ENCODE measurements at regions of chr10 and their contacts with region 1.

Region 1: DNA sequence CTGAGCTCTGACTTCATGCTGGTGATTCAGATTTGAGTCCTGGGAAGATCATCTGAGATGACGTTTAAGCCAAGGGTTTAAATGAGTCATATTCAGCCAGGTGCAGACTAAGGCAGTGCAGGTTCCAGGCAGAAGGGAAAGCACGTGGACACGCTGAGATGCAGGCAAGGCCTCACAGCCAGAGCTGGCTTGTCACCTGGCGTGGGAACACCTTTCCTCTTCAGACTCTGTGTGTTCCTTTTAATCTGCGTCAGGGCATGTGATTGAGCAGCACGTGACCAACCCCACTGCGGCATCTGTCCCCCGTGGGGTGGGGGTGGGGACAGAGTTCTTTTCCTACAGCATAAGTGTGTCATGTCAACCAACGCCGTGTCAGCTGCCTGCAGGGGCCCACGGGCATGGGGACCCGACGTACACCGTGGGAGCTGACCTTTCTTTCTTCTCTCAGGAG is 10.7 kb upstream of the IDI2 start:
- DNase-seq: peak; percentile 12 to 37
- ATAC-seq: peak; percentile 59 to 67
- H3K4me3 ChIP-seq: no peak overlapping the region
- H3K27ac ChIP-seq: no peak overlapping the region
- H3K4me1 ChIP-seq: no peaks in the 10 kb centered on the region
- CTCF ChIP-seq: no peak
- EP300 ChIP-seq: no peak
- POLR2A ChIP-seq: no peak
- RAD21 ChIP-seq: no peak

Region 2: GRCh38 chr10:1048732-1049424 is 12.5 kb after region 1 on chr10 and contains the start of gene IDI1:
- CTCF ChIA-PET with region 1: interaction called, 6 read pairs
- POLR2A ChIA-PET with region 1: interaction called, 13 read pairs
- DNase-seq: peak; percentile 97 to 98
- ATAC-seq: peak; percentile 90 to 93
- H3K4me3 ChIP-seq: peak within 1 kb of the TSS; percentile 88
- H3K27ac ChIP-seq: peak within 1 kb of the TSS; percentile 90 to 91
- H3K4me1 ChIP-seq: peaks cover 28% of the 10 kb centered on the region
- CTCF ChIP-seq: no peak
- EP300 ChIP-seq: no peak
- POLR2A ChIP-seq: peak; percentile 92
- RAD21 ChIP-seq: no peak
- polyA plus RNA-seq, gene IDI1: 38.2 and 55.8 TPM in 2 replicates

Region 3: DNA sequence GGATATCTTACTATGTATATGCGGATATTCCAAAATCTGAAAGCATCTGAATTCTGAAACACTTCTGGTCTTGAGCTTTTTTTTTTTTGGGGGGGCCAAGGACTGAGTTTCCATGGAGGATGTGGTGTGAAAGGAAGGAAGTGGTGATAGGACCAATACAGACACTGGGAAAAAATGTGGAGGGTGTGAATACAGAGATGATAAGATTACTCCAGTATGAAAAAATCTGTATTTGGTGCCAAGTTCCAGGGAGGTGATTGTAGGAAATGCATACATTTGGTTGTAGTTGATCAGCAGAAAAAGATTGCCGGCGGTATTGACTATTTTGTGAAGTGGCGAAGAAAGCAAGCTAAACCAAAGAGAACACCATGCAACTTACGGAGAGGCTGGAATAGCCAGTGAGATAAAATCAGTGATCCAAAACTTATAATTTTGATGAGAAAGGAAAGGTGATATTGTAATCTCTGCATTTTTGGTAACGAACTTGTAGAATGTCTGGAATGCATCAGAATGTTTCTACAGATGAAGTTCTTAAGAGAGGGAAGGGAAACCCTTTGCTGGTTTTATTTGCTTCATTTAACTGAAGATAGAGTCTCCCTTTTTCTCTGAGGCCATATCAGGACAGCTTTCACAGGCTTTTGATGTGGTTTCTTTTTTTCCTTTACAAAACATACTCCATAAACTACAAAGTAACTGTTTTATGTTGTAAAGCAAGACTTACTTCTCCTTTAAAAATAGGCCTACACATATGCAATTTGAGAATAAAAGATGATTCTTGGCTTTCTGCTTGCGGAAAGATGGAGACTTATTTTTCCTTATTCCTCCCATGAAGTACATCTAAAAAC is 25.8 kb after region 1 on chr10:
- CTCF ChIA-PET with region 1: no interaction called
- POLR2A ChIA-PET with region 1: no interaction called
- DNase-seq: no peak
- ATAC-seq: no peak
- H3K4me3 ChIP-seq: no peak overlapping the region
- H3K27ac ChIP-seq: no peak overlapping the region
- H3K4me1 ChIP-seq: peaks cover 7% of the 10 kb centered on the region; the same call in 2 of the 3 replicates
- CTCF ChIP-seq: no peak
- EP300 ChIP-seq: no peak
- POLR2A ChIP-seq: no peak
- RAD21 ChIP-seq: no peak

Region 4: GRCh38 chr10:1209355-1209979 is 173.1 kb after region 1 on chr10:
- CTCF ChIA-PET with region 1: no interaction called
- POLR2A ChIA-PET with region 1: no interaction called
- DNase-seq: no peak
- ATAC-seq: no peak
- H3K4me3 ChIP-seq: no peak overlapping the region
- H3K27ac ChIP-seq: no peak overlapping the region
- H3K4me1 ChIP-seq: no peaks in the 10 kb centered on the region
- CTCF ChIP-seq: no peak
- EP300 ChIP-seq: no peak
- POLR2A ChIP-seq: no peak
- RAD21 ChIP-seq: no peak

Measured in A549 (cell line).